ENCODE measurements at regions of chr17 and their contacts with region 1.

Region 1: GRCh38 chr17:52383493-52384100 is 225.1 kb upstream of the CA10 start:
- DNase-seq: peak; percentile 8 to 54
- H3K4me3 ChIP-seq: no peak overlapping the region
- H3K27ac ChIP-seq: no peak overlapping the region
- H3K4me1 ChIP-seq: no peaks in the 10 kb centered on the region
- H3K27me3 ChIP-seq: no peaks in the 10 kb centered on the region
- CTCF ChIP-seq: peak; percentile 76

Region 2: GRCh38 chr17:52336816-52337215 is 46.8 kb before region 1 on chr17:
- CTCF ChIA-PET with region 1: no interaction called
- POLR2A ChIA-PET with region 1: no interaction called
- intact Hi-C with region 1: no loop called
- DNase-seq: no peak
- H3K4me3 ChIP-seq: no peak overlapping the region
- H3K27ac ChIP-seq: no peak overlapping the region
- H3K4me1 ChIP-seq: no peaks in the 10 kb centered on the region
- H3K27me3 ChIP-seq: no peaks in the 10 kb centered on the region
- CTCF ChIP-seq: no peak

Region 3: GRCh38 chr17:52841971-52842370 is 458.4 kb after region 1 on chr17:
- CTCF ChIA-PET with region 1: no interaction called
- POLR2A ChIA-PET with region 1: no interaction called
- intact Hi-C with region 1: no loop called
- DNase-seq: no peak
- H3K4me3 ChIP-seq: no peak overlapping the region
- H3K27ac ChIP-seq: no peak overlapping the region
- H3K4me1 ChIP-seq: no peaks in the 10 kb centered on the region
- H3K27me3 ChIP-seq: no peaks in the 10 kb centered on the region
- CTCF ChIP-seq: no peak

Region 4: GRCh38 chr17:54172096-54172984 is 1788.7 kb after region 1 on chr17:
- CTCF ChIA-PET with region 1: no interaction called
- POLR2A ChIA-PET with region 1: no interaction called
- intact Hi-C with region 1: loop called (anchors 5 kb)
- DNase-seq: peak in 1 of 2 experiments; percentile 9
- H3K4me3 ChIP-seq: no peak overlapping the region
- H3K27ac ChIP-seq: no peak overlapping the region
- H3K4me1 ChIP-seq: no peaks in the 10 kb centered on the region
- H3K27me3 ChIP-seq: no peaks in the 10 kb centered on the region
- CTCF ChIP-seq: peak; percentile 73

Measured in PC-9 (cell line).